ENCODE measurements at regions of chr14 and their contacts with region 1.

Region 1: DNA sequence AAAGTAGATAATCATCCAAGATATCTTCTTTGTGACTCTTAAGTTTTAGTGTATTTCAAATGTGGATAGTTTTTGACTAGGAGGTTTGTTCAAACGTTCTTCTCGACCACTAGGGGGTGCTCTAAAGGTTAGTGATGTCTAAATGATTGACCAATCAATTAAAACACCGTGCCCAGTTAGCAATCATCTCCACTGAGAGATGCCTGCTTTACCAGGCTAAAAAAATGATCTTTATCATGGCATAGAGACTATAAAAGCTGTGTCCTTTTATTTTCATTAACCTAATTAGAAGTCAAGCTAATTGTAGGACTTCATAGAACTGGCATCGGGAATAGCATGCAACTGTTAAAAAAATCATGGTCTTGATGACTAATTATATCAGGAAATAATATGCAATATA is 153.9 kb downstream of the PRKCH start:
- DNase-seq: peak; percentile 89
- ATAC-seq: no peak
- H3K4me3 ChIP-seq: no peak overlapping the region
- H3K27ac ChIP-seq: peak overlapping the region; percentile 40
- H3K4me1 ChIP-seq: peaks cover 84% of the 10 kb centered on the region
- H3K27me3 ChIP-seq: no peaks in the 10 kb centered on the region
- CTCF ChIP-seq: peak; percentile 97

Region 2: DNA sequence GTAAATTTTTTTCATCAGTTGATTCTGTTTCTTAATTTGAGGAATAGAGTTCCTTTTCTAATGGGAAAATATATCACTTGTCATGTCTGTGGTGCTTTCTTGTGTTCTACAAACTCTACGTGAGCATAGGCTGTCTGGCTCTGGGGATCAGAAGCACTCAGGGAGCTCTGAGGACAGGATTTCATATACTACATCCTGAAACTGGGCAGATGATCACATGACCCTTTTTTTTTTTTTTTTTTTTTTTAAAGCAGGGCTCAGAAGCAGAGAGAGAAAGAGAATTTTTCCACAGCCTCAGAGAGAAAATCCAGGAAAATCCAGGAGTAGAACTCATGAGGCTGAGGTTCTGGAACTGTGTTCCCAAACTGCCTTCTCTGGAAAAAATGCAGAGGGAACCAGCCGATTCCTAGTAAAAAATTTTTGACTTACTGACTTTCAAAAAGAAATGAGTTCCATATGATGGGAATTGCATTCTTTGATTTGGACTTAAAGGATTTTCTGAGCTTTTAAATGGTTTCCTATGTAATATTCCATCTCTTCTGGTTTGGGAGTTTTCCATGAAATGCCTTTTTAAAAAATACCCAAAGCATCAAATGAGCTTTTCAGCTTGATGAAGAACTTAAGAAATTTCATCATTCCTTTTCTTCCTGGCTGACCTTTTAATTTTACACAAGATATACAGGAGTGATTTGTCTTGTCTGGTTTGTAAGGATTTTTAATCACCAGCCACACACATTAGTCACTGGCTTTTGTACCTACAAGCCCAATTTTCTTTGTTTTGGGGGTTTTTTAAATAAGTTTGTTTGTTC is 36.9 kb after region 1 on chr14:
- CTCF ChIA-PET with region 1: no interaction called
- POLR2A ChIA-PET with region 1: no interaction called
- intact Hi-C with region 1: loop called (anchors 5 kb)
- DNase-seq: peak; percentile 43
- ATAC-seq: 0 out of 2 replicates have a peak, but pooled peaks have one; percentile 1
- H3K4me3 ChIP-seq: no peak overlapping the region
- H3K27ac ChIP-seq: peak overlapping the region; percentile 39
- H3K4me1 ChIP-seq: peaks cover 62% of the 10 kb centered on the region
- H3K27me3 ChIP-seq: no peaks in the 10 kb centered on the region
- CTCF ChIP-seq: no peak

Region 3: DNA sequence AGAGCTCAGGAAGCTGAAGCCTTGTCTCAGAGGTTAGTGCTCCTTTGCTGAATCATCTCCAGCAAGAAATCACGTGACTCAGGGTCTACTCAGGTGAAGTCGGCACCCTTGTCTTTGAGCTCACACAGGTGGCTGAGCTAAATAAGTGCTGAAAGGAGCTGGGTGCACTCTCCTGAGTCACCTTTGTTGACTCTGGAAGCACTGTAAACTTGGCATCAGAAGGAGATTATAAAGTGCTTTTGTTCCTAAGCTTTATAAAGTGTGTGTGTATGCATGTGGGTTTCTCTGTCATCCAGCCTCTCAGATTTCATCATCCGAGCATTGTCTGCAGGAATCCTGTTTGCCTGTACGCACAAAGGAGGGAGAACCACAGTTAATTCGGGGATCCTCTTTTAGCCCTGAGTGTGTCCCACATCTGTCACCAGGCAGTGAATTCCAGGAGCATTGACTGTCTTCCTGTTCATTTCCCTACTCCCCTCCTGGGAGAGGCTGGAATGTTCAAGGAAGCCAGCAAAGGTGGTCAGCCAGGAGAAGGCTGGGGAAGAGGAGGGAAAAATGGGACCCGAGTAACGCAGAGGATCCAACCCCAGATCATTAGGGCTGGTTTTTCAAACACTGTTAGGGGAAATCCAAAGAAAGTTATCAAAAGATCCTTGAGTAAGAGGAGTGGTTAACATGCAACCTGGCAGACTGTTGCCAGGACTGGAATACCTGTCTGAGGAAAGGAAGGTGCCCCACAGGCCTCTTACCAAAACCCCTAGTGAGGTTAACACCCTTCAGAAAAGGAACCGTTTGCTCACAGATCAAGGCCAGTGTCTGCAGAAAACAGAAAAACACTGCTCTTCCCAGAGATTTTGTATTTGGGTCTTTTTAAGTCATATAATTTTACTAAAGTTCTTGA is 62.5 kb after region 1 on chr14:
- CTCF ChIA-PET with region 1: no interaction called
- POLR2A ChIA-PET with region 1: no interaction called
- intact Hi-C with region 1: loop called (anchors 1 kb)
- DNase-seq: peak; percentile 100
- ATAC-seq: peak; percentile 94
- H3K4me3 ChIP-seq: peak overlapping the region; percentile 8; the same call in 1 of the 2 replicates
- H3K27ac ChIP-seq: peak overlapping the region; percentile 90
- H3K4me1 ChIP-seq: peaks cover 58% of the 10 kb centered on the region
- H3K27me3 ChIP-seq: no peaks in the 10 kb centered on the region
- CTCF ChIP-seq: no peak

Region 4: GRCh38 chr14:61573748-61574513 is 98.6 kb after region 1 on chr14:
- CTCF ChIA-PET with region 1: no interaction called
- POLR2A ChIA-PET with region 1: no interaction called
- intact Hi-C with region 1: no loop called
- DNase-seq: peak; percentile 81
- ATAC-seq: peak; percentile 83
- H3K4me3 ChIP-seq: peak overlapping the region; percentile 1; the same call in 1 of the 2 replicates
- H3K27ac ChIP-seq: peak overlapping the region; percentile 72
- H3K4me1 ChIP-seq: peaks cover 72% of the 10 kb centered on the region
- H3K27me3 ChIP-seq: no peaks in the 10 kb centered on the region
- CTCF ChIP-seq: no peak

Region 5: GRCh38 chr14:61638595-61639387 is 163.5 kb after region 1 on chr14:
- CTCF ChIA-PET with region 1: no interaction called
- POLR2A ChIA-PET with region 1: no interaction called
- intact Hi-C with region 1: loop called (anchors 2 kb)
- DNase-seq: peak; percentile 92
- ATAC-seq: peak; percentile 90
- H3K4me3 ChIP-seq: 0 out of 2 replicates have a peak overlapping the region, but pooled peaks have one; percentile 3
- H3K27ac ChIP-seq: peak overlapping the region; percentile 75
- H3K4me1 ChIP-seq: peaks cover 36% of the 10 kb centered on the region
- H3K27me3 ChIP-seq: no peaks in the 10 kb centered on the region
- CTCF ChIP-seq: no peak

Region 6: GRCh38 chr14:61653507-61653906 is 178.2 kb after region 1 on chr14:
- CTCF ChIA-PET with region 1: interaction called, 3 read pairs
- POLR2A ChIA-PET with region 1: no interaction called
- intact Hi-C with region 1: loop called (anchors 2 kb)
- DNase-seq: peak; percentile 94
- ATAC-seq: peak; percentile 82
- H3K4me3 ChIP-seq: peak overlapping the region; percentile 2; the same call in 1 of the 2 replicates
- H3K27ac ChIP-seq: peak overlapping the region; percentile 67
- H3K4me1 ChIP-seq: peaks cover 50% of the 10 kb centered on the region
- H3K27me3 ChIP-seq: no peaks in the 10 kb centered on the region
- CTCF ChIP-seq: no peak

Region 7: DNA sequence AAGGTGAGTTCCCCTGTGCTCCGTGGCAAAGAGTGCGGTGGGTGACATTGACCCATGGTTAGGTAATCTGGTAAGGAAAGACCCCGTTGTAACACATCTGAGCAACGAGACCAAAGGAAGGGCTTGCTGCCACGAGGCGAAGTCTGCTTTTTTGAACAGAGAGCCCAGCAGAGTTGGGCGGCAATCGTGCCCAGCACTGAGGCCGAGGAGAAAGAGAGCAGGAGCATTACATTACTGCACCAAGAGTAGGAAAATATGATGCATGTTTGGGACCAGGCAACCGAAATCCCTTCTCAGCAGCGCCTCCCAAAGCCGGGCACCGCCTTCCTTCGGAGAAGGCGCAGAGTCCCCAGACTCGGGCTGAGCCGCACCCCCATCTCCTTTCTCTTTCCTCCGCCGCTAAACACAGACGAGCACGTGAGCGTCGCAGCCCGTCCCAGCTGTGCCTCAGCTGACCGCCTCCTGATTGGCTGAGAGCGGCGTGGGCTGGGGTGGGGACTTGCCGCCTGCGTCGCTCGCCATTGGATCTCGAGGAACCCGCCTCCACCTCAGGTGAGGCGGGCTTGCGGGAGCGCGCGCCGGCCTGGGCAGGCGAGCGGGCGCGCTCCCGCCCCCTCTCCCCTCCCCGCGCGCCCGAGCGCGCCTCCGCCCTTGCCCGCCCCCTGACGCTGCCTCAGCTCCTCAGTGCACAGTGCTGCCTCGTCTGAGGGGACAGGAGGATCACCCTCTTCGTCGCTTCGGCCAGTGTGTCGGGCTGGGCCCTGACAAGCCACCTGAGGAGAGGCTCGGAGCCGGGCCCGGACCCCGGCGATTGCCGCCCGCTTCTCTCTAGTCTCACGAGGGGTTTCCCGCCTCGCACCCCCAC is 219.7 kb after region 1 on chr14 and contains the start of gene HIF1A:
- CTCF ChIA-PET with region 1: interaction called, 3 read pairs
- POLR2A ChIA-PET with region 1: no interaction called
- intact Hi-C with region 1: loop called (anchors 1 kb)
- DNase-seq: peak; percentile 100
- ATAC-seq: peak; percentile 90
- H3K4me3 ChIP-seq: peak within 1 kb of the TSS; percentile 86
- H3K27ac ChIP-seq: peak within 1 kb of the TSS; percentile 81
- H3K4me1 ChIP-seq: peaks cover 34% of the 10 kb centered on the region
- H3K27me3 ChIP-seq: no peaks in the 10 kb centered on the region
- CTCF ChIP-seq: peak; percentile 49
- total RNA-seq, gene HIF1A: 266 and 319 TPM in 2 replicates

Region 8: GRCh38 chr14:62029569-62029924 is 554.2 kb after region 1 on chr14:
- CTCF ChIA-PET with region 1: no interaction called
- POLR2A ChIA-PET with region 1: no interaction called
- intact Hi-C with region 1: loop called (anchors 10 kb)
- DNase-seq: no peak
- ATAC-seq: no peak
- H3K4me3 ChIP-seq: no peak overlapping the region
- H3K27ac ChIP-seq: no peak overlapping the region
- H3K4me1 ChIP-seq: peaks cover 38% of the 10 kb centered on the region
- H3K27me3 ChIP-seq: no peaks in the 10 kb centered on the region
- CTCF ChIP-seq: no peak

Measured in PC-3 (cell line).